CD14-positive monocyte (primary cell): ENCODE measurements at regions of chr7 and their contacts with region 1.

Region 1: DNA sequence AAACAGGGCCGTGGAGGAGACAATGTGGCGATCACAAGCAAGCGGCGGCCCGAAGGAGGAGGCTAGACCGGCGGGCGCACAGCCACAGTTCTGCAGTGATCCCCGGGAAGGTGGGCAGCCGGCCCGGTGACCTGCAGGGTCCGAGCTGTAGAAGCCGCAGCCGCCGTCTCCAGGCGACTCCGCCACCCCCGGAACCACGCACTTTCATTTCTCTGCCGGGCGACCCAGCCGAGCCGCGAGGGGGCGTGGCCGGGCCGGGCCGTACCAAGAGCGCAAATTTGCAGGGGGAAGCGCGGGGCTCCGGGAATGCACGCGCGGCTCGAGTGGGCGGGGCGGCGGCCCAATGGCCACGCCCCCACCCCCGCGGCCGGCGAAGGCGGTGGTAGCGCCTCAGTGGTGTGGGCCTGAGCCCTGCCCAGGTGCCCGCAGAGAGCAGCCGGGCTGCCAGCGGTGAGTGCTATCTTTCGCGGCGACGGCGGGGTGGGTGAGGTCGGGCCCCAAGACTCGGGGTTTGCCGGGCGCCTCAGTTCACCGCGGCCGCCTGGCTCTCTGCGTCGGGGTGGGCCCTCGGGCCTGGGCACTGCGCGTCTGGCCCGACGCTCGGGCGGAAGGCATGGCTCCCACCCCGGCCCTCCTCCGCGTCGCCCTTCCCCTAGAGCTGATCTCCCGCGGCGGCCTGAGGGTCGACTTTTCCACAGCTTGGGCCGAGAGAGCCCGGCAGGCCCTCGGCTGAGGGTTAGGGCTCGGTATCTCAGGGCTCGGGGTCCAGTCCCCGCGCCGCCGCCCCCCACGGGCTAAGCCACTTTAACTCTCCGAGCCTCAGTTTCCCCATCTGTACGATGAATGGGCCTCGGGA is at the start of gene POR:
- DNase-seq: peak; percentile 89 to 96 (median 92)
- H3K4me3 ChIP-seq: peak within 1 kb of the TSS; percentile 66 to 96 (median 78)
- H3K4me3 Mint-ChIP-seq: peak within 1 kb of the TSS; percentile 87 to 93
- H3K27ac ChIP-seq: peak within 1 kb of the TSS; percentile 78 to 91
- H3K27ac Mint-ChIP-seq: peak within 1 kb of the TSS; percentile 90 to 96 (median 94)
- H3K4me1 ChIP-seq: peaks cover 28% of the 10 kb centered on the region in 2 donors
- H3K4me1 Mint-ChIP-seq: peaks cover 49% of the 10 kb centered on the region
- H3K27me3 ChIP-seq: no peaks in the 10 kb centered on the region
- H3K27me3 Mint-ChIP-seq: peaks cover 0 to 8% (median 3%) of the 10 kb centered on the region in 3 donors
- CTCF ChIP-seq: no peak
- polyA plus RNA-seq, gene POR: 90.5 to 102 (median 98.1) TPM

Region 2: GRCh38 chr7:75842836-75843446 is 72.0 kb before region 1 on chr7:
- intact Hi-C with region 1: loop called in 1 of 2 experiments (anchors 2 kb)
- DNase-seq: peak; percentile 82 to 96 (median 93)
- H3K4me3 ChIP-seq: peak overlapping the region; percentile 10 to 61 (median 15)
- H3K4me3 Mint-ChIP-seq: peak overlapping the region; percentile 60 to 76
- H3K27ac ChIP-seq: peak overlapping the region; percentile 35 to 72
- H3K27ac Mint-ChIP-seq: peak overlapping the region; percentile 92 to 98 (median 96)
- H3K4me1 ChIP-seq: peaks cover 28 to 32% of the 10 kb centered on the region in 2 donors
- H3K4me1 Mint-ChIP-seq: peaks cover 29% of the 10 kb centered on the region
- H3K27me3 ChIP-seq: no peaks in the 10 kb centered on the region
- H3K27me3 Mint-ChIP-seq: peaks cover 0 to 3% (median 0%) of the 10 kb centered on the region in 3 donors
- CTCF ChIP-seq: no peak

Region 3: DNA sequence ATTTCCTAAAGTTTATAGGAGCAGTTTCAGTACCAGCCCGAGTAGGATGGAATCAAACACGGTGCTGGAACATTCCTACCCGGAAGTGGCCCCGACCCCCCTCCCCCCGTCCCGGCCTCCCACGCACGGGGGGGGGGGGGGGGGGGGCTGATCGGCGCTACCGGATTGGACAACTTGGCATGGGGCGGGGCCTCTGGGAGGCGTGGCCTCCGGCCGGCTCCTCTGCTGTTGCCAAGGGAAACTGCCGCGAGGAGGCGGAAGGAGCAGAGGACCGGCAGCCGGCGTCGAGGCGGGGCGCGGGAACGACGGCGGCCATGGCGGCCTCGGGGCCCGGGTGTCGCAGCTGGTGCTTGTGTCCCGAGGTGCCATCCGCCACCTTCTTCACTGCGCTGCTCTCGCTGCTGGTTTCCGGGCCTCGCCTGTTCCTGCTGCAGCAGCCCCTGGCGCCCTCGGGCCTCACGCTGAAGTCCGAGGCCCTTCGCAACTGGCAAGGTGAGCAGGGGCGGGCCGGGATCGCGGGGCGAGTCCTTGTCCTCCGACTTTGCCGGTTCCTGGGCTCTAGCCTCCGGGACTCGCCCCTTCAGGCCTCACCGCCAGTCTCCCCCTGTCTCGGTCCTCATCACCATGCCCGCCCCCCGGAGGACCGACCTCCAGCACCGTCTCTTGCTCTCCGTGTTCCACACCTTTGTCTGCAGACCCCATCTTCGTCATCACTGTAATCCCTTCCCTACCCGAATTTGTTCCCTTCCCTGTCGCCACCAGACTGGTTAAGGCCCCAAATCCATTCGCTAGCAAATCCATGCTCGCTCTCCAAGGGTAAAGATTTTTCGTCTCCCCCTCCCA is 36.0 kb before region 1 on chr7 and contains the start of gene RHBDD2:
- intact Hi-C with region 1: loop called in 1 of 2 experiments (anchors 5 kb)
- DNase-seq: peak; percentile 91 to 94 (median 93)
- H3K4me3 ChIP-seq: peak within 1 kb of the TSS; percentile 90 to 95 (median 94)
- H3K4me3 Mint-ChIP-seq: peak within 1 kb of the TSS; percentile 89 to 97
- H3K27ac ChIP-seq: peak within 1 kb of the TSS in 1 of 2 donors; percentile 83
- H3K27ac Mint-ChIP-seq: peak within 1 kb of the TSS; percentile 79 to 97 (median 91)
- H3K4me1 ChIP-seq: peaks cover 47 to 54% of the 10 kb centered on the region in 2 donors
- H3K4me1 Mint-ChIP-seq: peaks cover 49% of the 10 kb centered on the region
- H3K27me3 ChIP-seq: no peaks in the 10 kb centered on the region
- H3K27me3 Mint-ChIP-seq: peaks cover 0 to 4% (median 3%) of the 10 kb centered on the region in 3 donors
- CTCF ChIP-seq: no peak
- polyA plus RNA-seq, gene RHBDD2: 34.1 to 54.6 (median 53.1) TPM

Region 4: GRCh38 chr7:75951511-75951917 is 36.6 kb after region 1 on chr7:
- intact Hi-C with region 1: loop called (anchors 5 kb)
- DNase-seq: peak; percentile 95 to 100 (median 98)
- H3K4me3 ChIP-seq: no peak overlapping the region
- H3K4me3 Mint-ChIP-seq: peak overlapping the region; percentile 27 to 35
- H3K27ac ChIP-seq: peak overlapping the region; percentile 69 to 73
- H3K27ac Mint-ChIP-seq: peak overlapping the region; percentile 85 to 95 (median 91)
- H3K4me1 ChIP-seq: peaks cover 50 to 57% of the 10 kb centered on the region in 2 donors
- H3K4me1 Mint-ChIP-seq: peaks cover 61% of the 10 kb centered on the region
- H3K27me3 ChIP-seq: no peaks in the 10 kb centered on the region
- H3K27me3 Mint-ChIP-seq: peaks cover 0 to 8% (median 4%) of the 10 kb centered on the region in 3 donors
- CTCF ChIP-seq: no peak

Region 5: GRCh38 chr7:75957012-75957736 is 42.2 kb after region 1 on chr7:
- intact Hi-C with region 1: loop called (anchors 5 kb)
- DNase-seq: no peak
- H3K4me3 ChIP-seq: no peak overlapping the region
- H3K4me3 Mint-ChIP-seq: no peak overlapping the region
- H3K27ac ChIP-seq: no peak overlapping the region
- H3K27ac Mint-ChIP-seq: peak overlapping the region in 2 of 7 donors; percentile 40 to 76
- H3K4me1 ChIP-seq: peaks cover 31 to 37% of the 10 kb centered on the region in 2 donors
- H3K4me1 Mint-ChIP-seq: peaks cover 35% of the 10 kb centered on the region
- H3K27me3 ChIP-seq: no peaks in the 10 kb centered on the region
- H3K27me3 Mint-ChIP-seq: peaks cover 0 to 2% (median 0%) of the 10 kb centered on the region in 3 donors
- CTCF ChIP-seq: no peak

Region 6: DNA sequence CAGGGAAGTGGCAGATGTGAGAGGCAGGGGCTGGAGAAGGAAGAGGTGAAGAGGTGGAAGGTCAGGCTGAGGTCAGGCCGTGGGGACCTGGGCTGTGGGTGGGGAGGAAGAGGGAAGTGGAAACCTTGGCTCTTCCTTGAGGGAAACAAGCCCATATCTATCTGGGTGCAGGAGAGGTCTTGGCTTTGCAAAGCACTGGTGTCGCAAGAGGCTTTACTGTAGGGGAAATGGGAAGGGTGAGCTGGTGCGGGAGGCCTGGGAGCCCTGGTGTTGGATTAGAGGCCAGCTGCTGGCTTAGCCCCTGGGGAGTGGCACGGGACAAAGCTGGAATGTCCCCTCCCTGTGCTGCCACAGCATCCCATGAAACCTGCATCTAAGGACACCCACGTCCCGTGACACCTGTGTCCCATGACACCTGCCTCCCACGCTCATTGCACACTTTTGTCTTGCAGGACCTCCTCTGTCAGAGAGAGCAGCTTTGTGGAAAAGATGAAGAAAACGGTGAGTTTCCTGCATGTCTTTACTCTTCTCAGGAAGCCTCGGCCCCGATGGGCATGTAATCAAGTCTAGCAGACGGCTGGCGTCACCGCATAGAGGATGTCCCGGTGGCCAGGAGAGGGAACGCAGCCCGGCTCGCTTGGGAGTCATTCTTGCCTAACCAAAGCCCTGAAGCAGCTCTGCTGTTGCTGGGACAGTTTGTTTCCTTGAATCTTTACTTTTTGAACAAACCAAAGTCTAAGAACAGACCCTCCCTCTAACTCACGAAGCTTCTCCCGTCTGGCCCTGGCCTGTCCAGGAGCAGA is 57.2 kb after region 1 on chr7:
- intact Hi-C with region 1: loop called in 1 of 2 experiments (anchors 5 kb)
- DNase-seq: peak; percentile 49 to 60 (median 52)
- H3K4me3 ChIP-seq: peak overlapping the region in 1 of 3 experiments; percentile 49
- H3K4me3 Mint-ChIP-seq: peak overlapping the region; percentile 51 to 83
- H3K27ac ChIP-seq: no peak overlapping the region
- H3K27ac Mint-ChIP-seq: peak overlapping the region; percentile 70 to 87 (median 79)
- H3K4me1 ChIP-seq: peaks cover 29 to 30% of the 10 kb centered on the region in 2 donors
- H3K4me1 Mint-ChIP-seq: peaks cover 31% of the 10 kb centered on the region
- H3K27me3 ChIP-seq: no peaks in the 10 kb centered on the region
- H3K27me3 Mint-ChIP-seq: peaks cover 0 to 2% (median 2%) of the 10 kb centered on the region in 3 donors
- CTCF ChIP-seq: no peak

Region 7: DNA sequence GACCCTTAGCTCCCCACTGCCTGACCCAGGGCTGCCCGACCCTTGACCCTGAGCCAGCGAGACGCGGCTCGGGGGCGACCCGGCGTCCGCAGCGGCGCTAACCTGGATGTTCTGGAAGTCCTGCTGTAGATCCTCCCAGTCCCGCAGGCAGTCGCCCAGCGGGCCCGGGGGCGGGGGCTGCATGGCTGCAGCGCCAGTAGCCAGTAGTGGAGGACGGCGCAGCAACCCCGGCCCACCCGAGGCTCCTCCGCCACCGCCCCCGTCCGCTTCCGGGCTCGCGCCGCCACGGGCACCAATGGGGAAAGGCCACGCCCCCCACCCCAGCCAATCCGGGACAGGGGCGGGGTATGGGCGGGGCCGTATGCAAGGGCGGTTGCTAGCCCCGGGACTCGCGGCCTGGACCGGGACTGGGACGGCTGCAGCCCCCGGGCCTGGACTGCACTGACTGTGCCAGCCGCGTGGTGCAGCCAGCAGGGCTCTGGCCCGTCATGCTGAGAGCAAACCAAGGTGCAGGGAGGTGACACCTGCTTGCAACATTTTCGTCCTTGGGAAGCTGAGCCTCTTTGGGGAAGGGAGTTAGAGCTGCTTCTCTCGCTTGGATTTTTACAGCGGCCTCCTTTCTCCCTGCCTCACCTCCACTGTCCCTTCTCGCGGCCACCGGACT is 79.6 kb after region 1 on chr7 and contains the start of gene TMEM120A:
- intact Hi-C with region 1: loop called in 1 of 2 experiments (anchors 2 kb)
- DNase-seq: peak; percentile 88 to 90 (median 89)
- H3K4me3 ChIP-seq: peak within 1 kb of the TSS; percentile 61 to 86 (median 86)
- H3K4me3 Mint-ChIP-seq: peak within 1 kb of the TSS; percentile 77 to 84
- H3K27ac ChIP-seq: peak within 1 kb of the TSS in 1 of 2 donors; percentile 78
- H3K27ac Mint-ChIP-seq: peak within 1 kb of the TSS; percentile 64 to 99 (median 95)
- H3K4me1 ChIP-seq: peaks cover 37 to 51% of the 10 kb centered on the region in 2 donors
- H3K4me1 Mint-ChIP-seq: peaks cover 51% of the 10 kb centered on the region
- H3K27me3 ChIP-seq: no peaks in the 10 kb centered on the region
- H3K27me3 Mint-ChIP-seq: peaks cover 0 to 4% (median 0%) of the 10 kb centered on the region in 3 donors
- CTCF ChIP-seq: no peak
- polyA plus RNA-seq, gene TMEM120A: 65.5 to 79.9 (median 76.1) TPM